Posterior vena cava (tissue), 2 donors: ENCODE measurements at regions of chrX and their contacts with region 1.

Region 1: GRCh38 chrX:47614618-47615017 is 5.0 kb downstream of the SYN1 start:
- DNase-seq: peak; percentile 6

Region 2: GRCh38 chrX:47483310-47484268 is 131.0 kb before region 1 on chrX:
- intact Hi-C with region 1: no loop called
- DNase-seq: no peak

Region 3: DNA sequence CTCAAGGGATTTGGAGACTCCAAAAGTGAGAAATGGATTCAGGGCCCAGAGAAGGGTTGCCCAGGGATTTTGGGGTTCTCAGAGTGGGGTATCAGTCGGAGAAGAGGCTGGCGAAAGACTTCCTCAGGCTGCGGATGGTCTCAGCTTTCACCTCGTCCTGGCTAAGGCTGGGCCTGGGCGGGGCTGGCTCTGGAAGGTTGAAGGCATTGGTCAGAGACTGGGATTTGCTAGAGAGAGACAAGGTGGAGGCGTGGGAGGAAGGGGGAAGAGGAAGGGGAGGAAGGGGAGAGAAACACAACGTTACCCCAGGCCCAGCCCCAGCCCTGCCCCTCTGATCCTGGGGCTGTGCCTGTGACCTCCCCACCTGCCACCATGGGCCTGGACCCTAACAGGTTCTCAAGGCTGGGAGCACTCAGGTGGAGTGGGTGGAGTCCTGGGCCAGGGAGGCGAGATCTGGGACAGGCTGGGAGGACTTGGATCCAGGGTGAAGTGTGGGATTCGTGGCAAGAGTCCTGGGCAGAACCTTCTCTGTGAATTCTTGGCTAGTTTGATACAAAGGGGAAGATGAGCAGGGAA is 41.8 kb before region 1 on chrX:
- intact Hi-C with region 1: loop called in 1 of 2 experiments (anchors 1 kb)
- DNase-seq: no peak